Testis (tissue), 5 donors: ENCODE measurements at regions of chr11 and their contacts with region 1.

Region 1: DNA sequence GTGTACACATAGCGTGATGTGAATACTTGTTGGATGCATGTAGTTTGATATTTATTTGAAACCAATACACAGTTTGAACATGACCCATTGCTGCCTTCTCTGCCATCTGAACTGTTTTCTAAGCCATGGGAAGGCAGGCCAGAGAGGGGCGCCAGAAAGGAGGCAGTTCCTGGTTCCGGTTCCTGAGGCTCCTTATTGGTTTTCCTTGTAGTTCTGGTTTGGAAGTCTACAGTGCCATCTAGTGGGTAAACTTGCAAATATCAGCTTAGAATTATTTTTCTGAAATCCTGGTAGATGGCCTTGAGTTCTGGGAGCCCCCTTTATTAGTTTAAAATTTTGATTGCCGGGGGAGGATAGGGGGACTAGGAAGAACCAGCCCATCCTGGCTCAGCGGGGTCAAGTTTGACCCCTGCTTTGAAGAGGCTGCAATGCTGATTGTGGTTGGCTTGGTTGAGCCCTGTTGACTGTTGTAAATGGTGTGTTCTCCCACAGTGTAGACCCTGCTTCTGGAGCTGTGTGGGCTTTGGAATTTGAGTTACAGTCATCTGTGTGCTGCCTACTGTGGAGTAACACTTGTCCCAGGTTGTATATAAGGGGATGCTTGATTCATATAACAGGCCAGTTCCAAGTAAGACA is 48.4 kb downstream of the GRAMD1B start:
- DNase-seq: peak; percentile 60
- H3K4me3 ChIP-seq: no peak overlapping the region
- H3K27ac ChIP-seq: no peak overlapping the region
- H3K4me1 ChIP-seq: peaks cover 15% of the 10 kb centered on the region
- H3K27me3 ChIP-seq: no peaks in the 10 kb centered on the region
- CTCF ChIP-seq: peak; percentile 62 to 72 (median 71)
- POLR2A ChIP-seq: no peak

Region 2: DNA sequence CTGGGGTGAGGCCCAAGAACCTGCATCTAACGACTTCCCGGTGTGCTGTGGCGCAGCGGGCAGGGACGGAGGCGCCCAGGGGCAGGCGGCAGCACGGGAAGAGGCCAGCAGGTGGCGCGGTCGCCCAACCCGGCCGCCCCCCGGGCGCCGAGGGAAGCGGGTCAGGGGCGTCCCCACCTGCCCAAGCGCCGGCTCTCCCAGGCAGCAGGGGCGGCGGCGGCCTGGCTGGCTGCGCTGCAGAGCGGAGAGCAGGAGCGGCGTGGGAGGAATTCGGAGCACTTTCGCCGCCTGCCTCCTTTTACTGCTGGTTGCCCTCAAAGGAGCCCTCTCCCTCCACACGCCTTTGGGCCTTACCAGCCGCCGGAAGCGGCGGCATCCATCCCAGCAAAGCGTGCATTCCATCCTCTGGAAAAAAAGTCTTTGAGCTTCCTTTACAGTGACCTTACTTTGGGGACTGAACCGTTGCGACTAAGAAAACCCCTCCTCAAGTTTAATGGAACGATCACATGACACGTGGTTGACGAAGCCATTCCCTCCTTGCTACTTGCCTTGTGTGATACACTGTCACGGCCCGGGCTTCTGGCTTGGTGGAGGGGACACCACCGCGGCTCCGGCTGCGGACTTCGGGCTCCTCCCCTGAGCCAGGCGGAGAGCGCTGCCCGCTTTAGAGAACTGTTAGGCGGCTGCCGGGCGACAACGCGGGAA is 176.6 kb before region 1 on chr11:
- intact Hi-C with region 1: loop called (anchors 5 kb)
- DNase-seq: peak; percentile 73
- H3K4me3 ChIP-seq: peak overlapping the region; percentile 24 to 34
- H3K27ac ChIP-seq: no peak overlapping the region
- H3K4me1 ChIP-seq: peaks cover 4% of the 10 kb centered on the region
- H3K27me3 ChIP-seq: no peaks in the 10 kb centered on the region
- CTCF ChIP-seq: peak; percentile 76 to 94 (median 89)
- POLR2A ChIP-seq: no peak

Region 3: GRCh38 chr11:123407130-123407995 is 71.1 kb before region 1 on chr11:
- intact Hi-C with region 1: loop called (anchors 5 kb)
- DNase-seq: peak; percentile 84
- H3K4me3 ChIP-seq: no peak overlapping the region
- H3K27ac ChIP-seq: no peak overlapping the region
- H3K4me1 ChIP-seq: peaks cover 6% of the 10 kb centered on the region
- H3K27me3 ChIP-seq: no peaks in the 10 kb centered on the region
- CTCF ChIP-seq: peak; percentile 56 to 63 (median 60)
- POLR2A ChIP-seq: no peak

Region 4: GRCh38 chr11:123421589-123421988 is 56.9 kb before region 1 on chr11:
- intact Hi-C with region 1: no loop called
- DNase-seq: no peak
- H3K4me3 ChIP-seq: no peak overlapping the region
- H3K27ac ChIP-seq: no peak overlapping the region
- H3K4me1 ChIP-seq: no peaks in the 10 kb centered on the region
- H3K27me3 ChIP-seq: no peaks in the 10 kb centered on the region
- CTCF ChIP-seq: no peak
- POLR2A ChIP-seq: no peak